ENCODE measurements at regions of chr5 and their contacts with region 1.

Region 1: GRCh38 chr5:153496835-153497234 is 6.4 kb downstream of the GRIA1 start:
- DNase-seq: no peak
- ATAC-seq: no peak

Region 2: GRCh38 chr5:152560512-152561137 is 936.2 kb before region 1 on chr5:
- intact Hi-C with region 1: loop called in 1 of 2 experiments (anchors 10 kb)
- DNase-seq: peak; percentile 68
- ATAC-seq: peak; percentile 33 to 63

Region 3: DNA sequence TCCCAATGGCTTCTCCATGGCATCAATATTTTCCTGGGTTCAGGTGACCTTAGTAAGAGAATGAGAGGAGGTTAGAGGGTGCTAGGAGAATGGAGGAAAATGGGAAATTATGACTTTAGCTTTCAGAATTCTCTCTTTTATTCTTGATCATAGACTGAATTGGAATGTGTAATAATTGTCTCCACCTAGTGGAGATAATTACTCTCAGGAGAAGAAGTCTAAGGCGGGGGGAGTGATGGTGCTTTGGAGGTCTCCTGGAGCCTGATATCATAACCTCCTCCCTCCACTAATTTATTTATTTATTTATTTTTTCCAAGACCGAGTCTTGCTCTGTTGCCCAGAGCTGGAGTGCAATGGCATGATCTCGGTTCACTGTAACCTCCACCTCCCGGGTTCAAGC is 214.9 kb after region 1 on chr5:
- intact Hi-C with region 1: loop called (anchors 5 kb)
- DNase-seq: no peak
- ATAC-seq: no peak

Region 4: GRCh38 chr5:153964880-153965645 is 468.2 kb after region 1 on chr5:
- intact Hi-C with region 1: loop called (anchors 2 to 5 kb)
- DNase-seq: no peak
- ATAC-seq: peak; percentile 83 to 85